Activated T-helper 2 cell treated with anti-CD3 and anti-CD28 coated beads, Interferon-gamma antibody, Interleukin-2, Interleukin-4, amounts not matched to agents 10 μg/mL and 5 μg/mL and 100 μg/mL, durations not matched to agents 14 hours and 24 hours and 36 hours (primary cell): ENCODE measurements at regions of chr17 and their contacts with region 1.

Region 1: GRCh38 chr17:64975329-64976087 is 56.2 kb upstream of the LRRC37A3 start:
- DNase-seq: peak; percentile 98
- H3K4me3 Mint-ChIP-seq: peak overlapping the region; percentile 81
- H3K27ac Mint-ChIP-seq: peak overlapping the region; percentile 97
- H3K4me1 Mint-ChIP-seq: peaks cover 56% of the 10 kb centered on the region
- H3K27me3 Mint-ChIP-seq: no peaks in the 10 kb centered on the region

Region 2: DNA sequence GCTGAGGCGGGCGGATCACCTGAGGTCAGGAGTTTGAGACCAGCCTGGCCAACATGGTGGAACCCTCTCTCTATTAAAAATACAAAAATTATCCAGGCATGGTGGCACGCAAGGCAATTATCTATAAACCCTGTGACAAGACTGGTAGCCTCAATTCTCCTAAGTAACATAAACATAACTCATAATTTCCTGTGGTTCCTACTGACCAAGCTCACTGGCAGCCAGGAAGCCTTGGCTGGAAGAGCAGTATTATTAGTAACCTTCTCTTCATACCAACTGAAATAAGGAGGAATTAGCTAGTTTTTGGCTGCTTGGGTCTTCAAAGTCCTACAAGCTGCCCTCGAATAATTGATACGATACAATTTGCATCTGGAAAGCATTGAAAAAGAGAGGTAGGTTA is 24.6 kb before region 1 on chr17:
- intact Hi-C with region 1: no loop called
- DNase-seq: no peak
- H3K4me3 Mint-ChIP-seq: no peak overlapping the region
- H3K27ac Mint-ChIP-seq: no peak overlapping the region
- H3K4me1 Mint-ChIP-seq: peaks cover 12% of the 10 kb centered on the region
- H3K27me3 Mint-ChIP-seq: peaks cover 3% of the 10 kb centered on the region

Region 3: GRCh38 chr17:65100316-65101140 is 125.0 kb after region 1 on chr17:
- intact Hi-C with region 1: loop called (anchors 2 kb)
- DNase-seq: peak; percentile 79
- H3K4me3 Mint-ChIP-seq: peak overlapping the region; percentile 88
- H3K27ac Mint-ChIP-seq: peak overlapping the region; percentile 98
- H3K4me1 Mint-ChIP-seq: peaks cover 31% of the 10 kb centered on the region
- H3K27me3 Mint-ChIP-seq: peaks cover 5% of the 10 kb centered on the region